H1 (cell line): ENCODE measurements at regions of chr4 and their contacts with region 1.

Region 1: GRCh38 chr4:25913851-25914669 is at the start of gene SMIM20:
- DNase-seq: peak; percentile 61 to 93
- H3K4me3 ChIP-seq: peak within 1 kb of the TSS; percentile 75 to 89 (median 82)
- H3K27ac ChIP-seq: peak within 1 kb of the TSS; percentile 83
- H3K4me1 ChIP-seq: peaks cover 3 to 7% (median 5%) of the 10 kb centered on the region in 4 experiments; a peak in 6 of 7 replicates
- H3K27me3 ChIP-seq: peaks cover 0 to 8% (median 4%) of the 10 kb centered on the region in 4 experiments; a peak in 3 of 7 replicates
- CTCF ChIP-seq: no peak
- EP300 ChIP-seq: no peak
- POLR2A ChIP-seq: peak; percentile 87 to 94
- RAD21 ChIP-seq: no peak
- total RNA-seq, gene SMIM20: 30.9 and 36.9 TPM in 2 replicates

Region 2: GRCh38 chr4:25862411-25863346 is 51.4 kb before region 1 on chr4 and contains the start of gene SEL1L3:
- CTCF ChIA-PET with region 1: interaction called, 13 read pairs
- POLR2A ChIA-PET with region 1: interaction called, 6 read pairs
- DNase-seq: peak; percentile 23 to 74
- H3K4me3 ChIP-seq: peak within 1 kb of the TSS; percentile 46 to 78 (median 73)
- H3K27ac ChIP-seq: peak within 1 kb of the TSS; percentile 50; the same call in 1 of the 2 replicates
- H3K4me1 ChIP-seq: peaks cover 3 to 13% (median 9%) of the 10 kb centered on the region in 4 experiments; a peak in 5 of 7 replicates
- H3K27me3 ChIP-seq: peaks cover 0 to 10% (median 0%) of the 10 kb centered on the region in 4 experiments; a peak in 2 of 7 replicates
- CTCF ChIP-seq: no peak
- EP300 ChIP-seq: no peak
- POLR2A ChIP-seq: no peak
- RAD21 ChIP-seq: no peak
- total RNA-seq, gene SEL1L3: 51.0 and 54.0 TPM in 2 replicates

Region 3: GRCh38 chr4:25900310-25900709 is 13.8 kb before region 1 on chr4:
- CTCF ChIA-PET with region 1: interaction called, 4 read pairs
- POLR2A ChIA-PET with region 1: interaction called, 10 read pairs
- DNase-seq: no peak
- H3K4me3 ChIP-seq: no peak overlapping the region
- H3K27ac ChIP-seq: no peak overlapping the region
- H3K4me1 ChIP-seq: peaks cover 0 to 3% (median 0%) of the 10 kb centered on the region in 4 experiments; a peak in 1 of 7 replicates
- H3K27me3 ChIP-seq: peaks cover 0 to 2% (median 0%) of the 10 kb centered on the region in 4 experiments; a peak in 1 of 7 replicates
- CTCF ChIP-seq: no peak
- EP300 ChIP-seq: no peak
- POLR2A ChIP-seq: no peak
- RAD21 ChIP-seq: no peak